ENCODE measurements at regions of chr16 and their contacts with region 1.

Region 1: DNA sequence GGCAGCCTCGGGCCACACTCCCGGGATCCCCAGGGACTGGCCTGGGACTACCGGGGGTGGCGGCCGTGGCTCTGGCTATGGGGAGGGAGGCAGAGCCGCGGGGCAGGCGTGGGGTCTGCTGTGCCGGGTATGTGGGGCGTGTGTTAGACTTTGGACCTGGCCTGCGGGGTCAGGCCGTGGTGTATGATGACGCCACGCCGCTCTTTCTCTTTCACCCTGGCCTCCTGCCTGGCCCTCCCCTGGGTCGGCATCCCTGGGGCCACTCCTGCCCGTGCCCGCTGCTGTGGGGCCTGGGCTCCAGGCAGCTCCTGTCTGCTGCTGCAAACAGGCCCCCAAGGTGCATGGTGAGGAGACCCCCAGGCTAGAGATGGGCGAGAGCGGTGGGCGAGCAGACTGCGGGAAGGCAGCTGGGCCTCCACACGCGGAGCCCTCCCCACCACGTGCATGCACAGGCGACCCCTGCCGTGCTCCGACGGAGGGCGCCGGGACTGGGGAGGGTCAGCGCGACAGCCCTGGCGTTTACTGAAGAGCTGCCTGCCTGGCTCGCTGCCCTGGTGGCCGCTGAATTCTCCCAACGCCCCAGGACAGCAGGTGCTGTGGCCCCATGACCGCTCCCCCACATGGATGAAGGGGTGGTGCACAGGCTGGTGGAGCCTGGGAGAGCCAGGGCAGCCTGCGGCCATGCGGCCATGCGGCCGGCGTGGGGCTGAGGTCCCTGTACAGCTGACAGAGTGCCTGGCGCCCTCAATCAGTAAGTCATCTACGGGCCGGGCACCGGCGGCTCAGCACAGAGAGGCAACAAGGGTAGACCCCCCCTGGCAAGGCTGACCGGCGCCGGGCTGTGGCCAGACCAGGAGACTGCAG is 16.0 kb downstream of the CAPN15 start:
- DNase-seq: peak; percentile 73
- ATAC-seq: peak; percentile 79
- H3K4me3 ChIP-seq: peak overlapping the region; percentile 36 to 53 (median 39); a peak in 5 of 6 replicates
- H3K27ac ChIP-seq: peak overlapping the region; percentile 85
- H3K4me1 ChIP-seq: peaks cover 21% of the 10 kb centered on the region
- H3K27me3 ChIP-seq: no peaks in the 10 kb centered on the region
- CTCF ChIP-seq: peak; percentile 45
- EP300 ChIP-seq: 0 out of 4 replicates have a peak, but pooled peaks of 1 of the 2 experiments have one; percentile 16
- POLR2A ChIP-seq: no peak; a peak in 2 of 4 replicates
- RAD21 ChIP-seq: peak; percentile 6; the same call in 1 of the 2 replicates

Region 2: GRCh38 chr16:558298-559020 is 14.9 kb after region 1 on chr16:
- CTCF ChIA-PET with region 1: no interaction called
- POLR2A ChIA-PET with region 1: interaction called, 17 read pairs
- in situ Hi-C with region 1: no loop called
- intact Hi-C with region 1: no loop called
- DNase-seq: peak; percentile 80
- ATAC-seq: peak; percentile 68
- H3K4me3 ChIP-seq: peak overlapping the region; percentile 5 to 67 (median 25); a peak in 4 of 6 replicates
- H3K27ac ChIP-seq: peak overlapping the region; percentile 43
- H3K4me1 ChIP-seq: peaks cover 76% of the 10 kb centered on the region
- H3K27me3 ChIP-seq: peaks cover 11 to 39% of the 10 kb centered on the region in 2 experiments; a peak in 4 of 5 replicates
- CTCF ChIP-seq: no peak
- EP300 ChIP-seq: peak in 1 of 2 experiments; percentile 40; a peak in 2 of 4 replicates
- POLR2A ChIP-seq: no peak
- RAD21 ChIP-seq: peak; percentile 24; the same call in 1 of the 2 replicates

Region 3: GRCh38 chr16:578870-579405 is 35.4 kb after region 1 on chr16:
- CTCF ChIA-PET with region 1: no interaction called
- POLR2A ChIA-PET with region 1: no interaction called
- in situ Hi-C with region 1: no loop called
- intact Hi-C with region 1: no loop called
- DNase-seq: peak; percentile 60
- ATAC-seq: peak; percentile 81
- H3K4me3 ChIP-seq: peak overlapping the region in 1 of 3 experiments; percentile 24; a peak in 1 of 6 replicates
- H3K27ac ChIP-seq: no peak overlapping the region
- H3K4me1 ChIP-seq: peaks cover 12% of the 10 kb centered on the region
- H3K27me3 ChIP-seq: no peaks in the 10 kb centered on the region
- CTCF ChIP-seq: peak; percentile 98
- EP300 ChIP-seq: no peak
- POLR2A ChIP-seq: no peak
- RAD21 ChIP-seq: peak; percentile 96

Measured in HepG2 (cell line).